ENCODE measurements at regions of chr15 and their contacts with region 1.

Region 1: DNA sequence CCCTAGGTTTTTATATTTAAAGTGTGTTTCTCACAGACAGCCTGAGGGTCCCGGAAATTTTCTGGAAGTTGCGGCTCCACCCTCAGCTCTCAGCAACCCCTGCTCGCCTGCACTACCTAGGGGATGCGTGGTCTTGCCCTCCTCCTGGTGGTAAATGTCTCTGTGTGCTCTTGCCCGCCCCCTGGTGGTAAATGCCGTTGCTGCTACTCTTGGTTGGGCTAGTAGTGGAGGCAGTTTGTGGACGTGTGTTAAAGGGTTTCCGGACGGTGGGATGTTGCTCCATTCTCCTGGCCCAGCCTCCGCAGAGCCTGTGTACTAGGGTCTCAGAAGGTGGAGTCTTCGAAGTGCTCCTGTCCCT is 27.4 kb downstream of the STOML1 start:
- DNase-seq: peak; percentile 88 to 95
- ATAC-seq: peak; percentile 92
- H3K4me3 ChIP-seq: no peak overlapping the region
- H3K27ac ChIP-seq: no peak overlapping the region
- H3K4me1 ChIP-seq: no peaks in the 10 kb centered on the region
- H3K27me3 ChIP-seq: no peaks in the 10 kb centered on the region

Region 2: GRCh38 chr15:73873889-73874511 is 90.7 kb before region 1 on chr15:
- intact Hi-C with region 1: loop called in 1 of 2 experiments (anchors 2 kb)
- DNase-seq: no peak
- ATAC-seq: no peak
- H3K4me3 ChIP-seq: no peak overlapping the region
- H3K27ac ChIP-seq: no peak overlapping the region
- H3K4me1 ChIP-seq: no peaks in the 10 kb centered on the region
- H3K27me3 ChIP-seq: no peaks in the 10 kb centered on the region

Region 3: GRCh38 chr15:73897441-73898261 is 67.1 kb before region 1 on chr15:
- intact Hi-C with region 1: loop called (anchors 1 to 2 kb)
- DNase-seq: peak; percentile 73 to 83
- ATAC-seq: peak; percentile 67
- H3K4me3 ChIP-seq: no peak overlapping the region
- H3K27ac ChIP-seq: no peak overlapping the region
- H3K4me1 ChIP-seq: no peaks in the 10 kb centered on the region
- H3K27me3 ChIP-seq: no peaks in the 10 kb centered on the region

Region 4: GRCh38 chr15:73927476-73928240 is 37.1 kb before region 1 on chr15:
- intact Hi-C with region 1: no loop called
- DNase-seq: peak; percentile 78 to 91
- ATAC-seq: peak; percentile 38
- H3K4me3 ChIP-seq: peak overlapping the region; percentile 30 to 73
- H3K27ac ChIP-seq: peak overlapping the region; percentile 80 to 97
- H3K4me1 ChIP-seq: peaks cover 0 to 4% of the 10 kb centered on the region in 2 donors
- H3K27me3 ChIP-seq: no peaks in the 10 kb centered on the region

Region 5: GRCh38 chr15:73948982-73949381 is 15.7 kb before region 1 on chr15:
- intact Hi-C with region 1: loop called in 1 of 2 experiments (anchors 2 kb)
- DNase-seq: peak; percentile 6 to 23
- ATAC-seq: no peak
- H3K4me3 ChIP-seq: no peak overlapping the region
- H3K27ac ChIP-seq: no peak overlapping the region
- H3K4me1 ChIP-seq: no peaks in the 10 kb centered on the region
- H3K27me3 ChIP-seq: no peaks in the 10 kb centered on the region

Measured in aorta (tissue), 5 donors.